ENCODE measurements at regions of chrX and their contacts with region 1.

Region 1: GRCh38 chrX:129781134-129781672 is 1.5 kb downstream of the SASH3 start:
- DNase-seq: peak; percentile 65
- H3K4me3 Mint-ChIP-seq: peak overlapping the region; percentile 87
- H3K27ac Mint-ChIP-seq: peak overlapping the region; percentile 91
- H3K4me1 Mint-ChIP-seq: peaks cover 63% of the 10 kb centered on the region
- H3K27me3 Mint-ChIP-seq: no peaks in the 10 kb centered on the region

Region 2: DNA sequence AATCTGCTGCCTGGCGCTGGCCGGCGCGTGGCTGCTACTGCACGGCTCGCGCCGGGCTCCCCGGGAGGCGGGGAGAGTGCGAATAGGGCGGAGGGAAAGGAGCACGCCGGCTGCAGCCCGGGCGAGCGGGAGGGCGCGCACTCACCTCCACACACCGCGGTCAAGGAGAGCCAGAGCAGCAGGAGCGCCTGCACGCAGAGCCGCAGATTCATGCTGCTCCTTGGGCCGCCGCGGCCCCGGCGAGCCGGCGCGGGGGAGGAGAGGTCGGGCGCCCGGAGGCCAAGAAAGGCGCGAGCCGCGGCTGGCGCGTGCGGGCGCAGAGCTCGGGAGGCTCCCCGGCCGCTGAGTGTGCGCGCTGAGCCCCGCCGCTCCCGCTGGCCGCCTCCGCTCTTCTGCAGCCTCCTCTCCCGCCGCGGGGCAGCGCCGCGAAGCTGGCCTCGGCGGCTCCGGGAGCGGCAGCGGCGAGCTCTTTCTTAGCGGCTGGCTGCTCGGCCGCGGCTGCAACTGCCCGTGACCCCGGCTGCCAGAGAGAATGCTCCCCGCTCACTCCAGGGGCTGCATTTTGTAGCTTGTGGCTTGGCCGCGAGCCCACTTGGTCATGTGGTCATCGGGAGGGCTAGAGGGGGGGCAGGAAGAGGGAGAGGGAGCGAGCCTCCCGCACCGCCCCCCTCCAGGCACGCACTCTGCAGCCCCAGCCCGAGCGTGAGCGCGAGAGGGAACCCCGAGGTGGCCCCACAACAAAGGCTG is 126.6 kb before region 1 on chrX and contains the start of gene APLN:
- intact Hi-C with region 1: loop called (anchors 1 kb)
- DNase-seq: no peak
- H3K4me3 Mint-ChIP-seq: peak within 1 kb of the TSS; percentile 57
- H3K27ac Mint-ChIP-seq: no peak within 1 kb of the TSS
- H3K4me1 Mint-ChIP-seq: peaks cover 6% of the 10 kb centered on the region
- H3K27me3 Mint-ChIP-seq: peaks cover 16% of the 10 kb centered on the region
- total RNA-seq, gene APLN: 0.12 and 0.26 TPM in 2 replicates

Region 3: DNA sequence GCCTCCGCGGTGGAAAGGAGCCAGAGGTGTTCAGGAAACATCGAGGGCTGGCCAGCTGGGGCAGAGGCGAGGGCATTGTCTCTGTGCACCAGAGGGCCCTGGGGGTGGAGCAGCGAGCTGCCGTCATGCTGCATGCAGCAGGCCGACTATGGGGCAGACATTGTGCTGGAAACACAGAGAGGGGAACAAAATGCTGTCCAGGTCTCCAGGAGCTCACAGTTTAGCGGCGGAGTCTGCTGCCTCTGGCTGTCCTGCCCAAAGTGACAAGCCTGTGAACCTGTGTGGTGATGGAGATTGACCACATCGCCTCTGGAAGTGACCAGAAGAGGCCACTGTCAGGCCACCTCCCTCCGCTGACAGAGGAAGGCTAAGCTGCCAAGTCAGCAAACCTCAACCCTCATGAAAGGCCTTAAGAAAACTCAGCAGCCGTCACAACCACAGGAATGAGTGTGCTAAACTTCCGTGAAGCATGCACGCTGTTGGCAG is 21.6 kb before region 1 on chrX:
- intact Hi-C with region 1: loop called (anchors 1 kb)
- DNase-seq: peak; percentile 57
- H3K4me3 Mint-ChIP-seq: peak overlapping the region; percentile 22
- H3K27ac Mint-ChIP-seq: peak overlapping the region; percentile 91
- H3K4me1 Mint-ChIP-seq: peaks cover 48% of the 10 kb centered on the region
- H3K27me3 Mint-ChIP-seq: no peaks in the 10 kb centered on the region

Region 4: GRCh38 chrX:129843459-129844306 is 62.5 kb after region 1 on chrX and contains the start of gene ZDHHC9:
- intact Hi-C with region 1: loop called (anchors 2 kb)
- DNase-seq: peak; percentile 78
- H3K4me3 Mint-ChIP-seq: peak within 1 kb of the TSS; percentile 93
- H3K27ac Mint-ChIP-seq: peak within 1 kb of the TSS; percentile 88
- H3K4me1 Mint-ChIP-seq: peaks cover 28% of the 10 kb centered on the region
- H3K27me3 Mint-ChIP-seq: peaks cover 4% of the 10 kb centered on the region
- total RNA-seq, gene ZDHHC9: 13.6 and 14.2 TPM in 2 replicates

Measured in activated T-helper 1 cell treated with anti-CD3 and anti-CD28 coated beads, Interleukin-12 subunit alpha, Interleukin-12 subunit beta, Interleukin-2, Interleukin-4 antibody, amounts not matched to agents 30 ng/mL and 10 ng/mL and 1 ng/mL, durations not matched to agents 14 hours and 24 hours and 36 hours (primary cell).